HEK293 (cell line): ENCODE measurements at regions of chr16 and their contacts with region 1.

Region 1: GRCh38 chr16:77584205-77584859 is 138.0 kb upstream of the NUDT7 start:
- H3K4me3 ChIP-seq: no peak overlapping the region
- H3K27ac ChIP-seq: no peak overlapping the region
- H3K4me1 ChIP-seq: peaks cover 16% of the 10 kb centered on the region
- CTCF ChIP-seq: peak; percentile 57

Region 2: GRCh38 chr16:77236063-77236511 is 348.2 kb before region 1 on chr16:
- CTCF ChIA-PET with region 1: interaction called, 247 read pairs
- POLR2A ChIA-PET with region 1: interaction called, 3 read pairs
- H3K4me3 ChIP-seq: no peak overlapping the region
- H3K27ac ChIP-seq: no peak overlapping the region
- H3K4me1 ChIP-seq: peaks cover 18% of the 10 kb centered on the region
- CTCF ChIP-seq: peak; percentile 100

Region 3: GRCh38 chr16:77437859-77438258 is 146.5 kb before region 1 on chr16:
- CTCF ChIA-PET with region 1: interaction called, 77 read pairs
- POLR2A ChIA-PET with region 1: no interaction called
- H3K4me3 ChIP-seq: no peak overlapping the region
- H3K27ac ChIP-seq: no peak overlapping the region
- H3K4me1 ChIP-seq: peaks cover 9% of the 10 kb centered on the region; the same call in 1 of the 2 replicates
- CTCF ChIP-seq: peak; percentile 71

Region 4: GRCh38 chr16:77596261-77596660 is 11.9 kb after region 1 on chr16:
- CTCF ChIA-PET with region 1: interaction called, 24 read pairs
- POLR2A ChIA-PET with region 1: no interaction called
- H3K4me3 ChIP-seq: no peak overlapping the region
- H3K27ac ChIP-seq: no peak overlapping the region
- H3K4me1 ChIP-seq: peaks cover 12% of the 10 kb centered on the region
- CTCF ChIP-seq: no peak

Region 5: GRCh38 chr16:77660311-77660710 is 76.0 kb after region 1 on chr16:
- CTCF ChIA-PET with region 1: interaction called, 26 read pairs
- POLR2A ChIA-PET with region 1: no interaction called
- H3K4me3 ChIP-seq: no peak overlapping the region
- H3K27ac ChIP-seq: no peak overlapping the region; the same call in 1 of the 2 replicates
- H3K4me1 ChIP-seq: 0 out of 2 replicates have a peak, but pooled peaks cover 2% of the 10 kb centered on the region
- CTCF ChIP-seq: peak; percentile 45; the same call in 1 of the 2 replicates